ENCODE measurements at regions of chr17 and their contacts with region 1.

Region 1: GRCh38 chr17:5438716-5439445 is at the start of gene C1QBP:
- DNase-seq: peak; percentile 95
- ATAC-seq: peak; percentile 97
- H3K4me3 Mint-ChIP-seq: peak within 1 kb of the TSS; percentile 81
- H3K27ac Mint-ChIP-seq: peak within 1 kb of the TSS; percentile 84
- H3K4me1 Mint-ChIP-seq: peaks cover 34% of the 10 kb centered on the region
- H3K27me3 Mint-ChIP-seq: no peaks in the 10 kb centered on the region
- CTCF ChIP-seq: peak; percentile 98
- total RNA-seq, gene C1QBP: 463 to 470 TPM

Region 2: DNA sequence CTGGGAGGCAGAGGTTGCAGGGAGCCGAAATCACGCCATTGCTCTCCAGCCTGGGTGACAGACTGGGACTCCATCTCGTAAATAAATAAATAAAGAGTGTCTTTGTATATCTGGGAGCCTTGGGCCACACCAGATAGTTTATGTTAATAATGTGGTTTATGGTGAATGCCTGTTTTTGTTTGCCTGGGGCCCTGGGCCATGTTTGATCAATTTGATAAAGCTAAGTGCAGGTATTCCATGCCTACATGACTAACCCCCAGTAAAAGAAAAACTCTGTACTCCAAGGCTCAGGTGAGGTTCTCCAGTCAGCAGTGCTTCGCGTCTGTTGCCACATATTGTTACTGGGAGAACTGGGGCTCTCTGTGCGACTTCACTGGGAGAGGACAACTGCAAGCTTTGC is 219.3 kb before region 1 on chr17:
- CTCF ChIA-PET with region 1: no interaction called
- POLR2A ChIA-PET with region 1: no interaction called
- intact Hi-C with region 1: no loop called
- DNase-seq: no peak
- ATAC-seq: no peak
- H3K4me3 Mint-ChIP-seq: no peak overlapping the region
- H3K27ac Mint-ChIP-seq: no peak overlapping the region
- H3K4me1 Mint-ChIP-seq: peaks cover 20% of the 10 kb centered on the region
- H3K27me3 Mint-ChIP-seq: no peaks in the 10 kb centered on the region
- CTCF ChIP-seq: no peak

Region 3: DNA sequence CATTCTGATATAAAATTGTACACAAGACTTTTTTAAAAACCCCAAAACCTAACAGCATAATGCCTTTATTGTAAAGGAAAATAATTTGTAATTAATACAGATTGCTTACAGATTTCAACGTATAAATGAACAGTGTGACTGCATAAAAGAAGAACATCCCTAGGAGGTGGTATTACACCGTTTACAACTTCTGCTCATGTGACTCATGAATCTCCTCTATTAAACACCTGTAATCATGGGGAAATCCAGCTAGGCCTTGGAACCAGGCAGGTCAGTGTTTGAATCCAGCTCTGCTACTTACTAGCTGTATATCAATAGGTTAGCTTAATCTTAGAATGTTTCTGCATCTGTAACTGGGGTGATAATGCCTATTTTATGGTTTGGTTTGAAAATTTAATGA is 141.6 kb before region 1 on chr17:
- CTCF ChIA-PET with region 1: interaction called, 10 read pairs
- POLR2A ChIA-PET with region 1: no interaction called
- intact Hi-C with region 1: no loop called
- DNase-seq: no peak
- ATAC-seq: peak; percentile 49
- H3K4me3 Mint-ChIP-seq: no peak overlapping the region
- H3K27ac Mint-ChIP-seq: peak overlapping the region; percentile 30
- H3K4me1 Mint-ChIP-seq: peaks cover 36% of the 10 kb centered on the region
- H3K27me3 Mint-ChIP-seq: no peaks in the 10 kb centered on the region
- CTCF ChIP-seq: no peak

Region 4: DNA sequence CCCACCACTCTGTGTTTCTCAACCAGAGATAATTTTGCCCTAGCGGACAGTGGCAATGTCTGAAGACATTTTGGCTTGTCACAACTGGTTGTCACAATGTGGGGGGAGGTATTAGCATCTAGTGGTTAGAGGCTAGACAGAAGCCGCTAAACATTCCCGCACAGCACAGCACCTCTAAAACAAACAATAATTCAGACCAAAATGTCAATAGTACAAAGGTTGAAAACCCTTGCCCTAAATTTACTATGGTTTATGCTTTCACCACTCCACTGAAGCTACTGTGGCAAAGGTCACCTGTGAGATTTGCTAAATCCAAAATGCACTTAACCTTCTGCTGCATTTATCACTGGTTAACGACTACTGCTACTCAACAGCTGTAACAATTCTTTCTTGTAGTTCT is 33.5 kb before region 1 on chr17:
- CTCF ChIA-PET with region 1: interaction called, 19 read pairs
- POLR2A ChIA-PET with region 1: interaction called, 6 read pairs
- intact Hi-C with region 1: no loop called
- DNase-seq: no peak
- ATAC-seq: no peak
- H3K4me3 Mint-ChIP-seq: no peak overlapping the region
- H3K27ac Mint-ChIP-seq: no peak overlapping the region
- H3K4me1 Mint-ChIP-seq: peaks cover 11% of the 10 kb centered on the region
- H3K27me3 Mint-ChIP-seq: no peaks in the 10 kb centered on the region
- CTCF ChIP-seq: no peak

Region 5: GRCh38 chr17:5419356-5419958 is 19.4 kb before region 1 on chr17 and contains the start of gene NUP88:
- CTCF ChIA-PET with region 1: interaction called, 68 read pairs
- POLR2A ChIA-PET with region 1: interaction called, 30 read pairs
- intact Hi-C with region 1: no loop called
- DNase-seq: peak; percentile 98
- ATAC-seq: peak; percentile 94
- H3K4me3 Mint-ChIP-seq: peak within 1 kb of the TSS; percentile 100
- H3K27ac Mint-ChIP-seq: peak within 1 kb of the TSS; percentile 100
- H3K4me1 Mint-ChIP-seq: peaks cover 40% of the 10 kb centered on the region
- H3K27me3 Mint-ChIP-seq: no peaks in the 10 kb centered on the region
- CTCF ChIP-seq: no peak
- total RNA-seq, gene NUP88: 140 to 141 TPM

Region 6: DNA sequence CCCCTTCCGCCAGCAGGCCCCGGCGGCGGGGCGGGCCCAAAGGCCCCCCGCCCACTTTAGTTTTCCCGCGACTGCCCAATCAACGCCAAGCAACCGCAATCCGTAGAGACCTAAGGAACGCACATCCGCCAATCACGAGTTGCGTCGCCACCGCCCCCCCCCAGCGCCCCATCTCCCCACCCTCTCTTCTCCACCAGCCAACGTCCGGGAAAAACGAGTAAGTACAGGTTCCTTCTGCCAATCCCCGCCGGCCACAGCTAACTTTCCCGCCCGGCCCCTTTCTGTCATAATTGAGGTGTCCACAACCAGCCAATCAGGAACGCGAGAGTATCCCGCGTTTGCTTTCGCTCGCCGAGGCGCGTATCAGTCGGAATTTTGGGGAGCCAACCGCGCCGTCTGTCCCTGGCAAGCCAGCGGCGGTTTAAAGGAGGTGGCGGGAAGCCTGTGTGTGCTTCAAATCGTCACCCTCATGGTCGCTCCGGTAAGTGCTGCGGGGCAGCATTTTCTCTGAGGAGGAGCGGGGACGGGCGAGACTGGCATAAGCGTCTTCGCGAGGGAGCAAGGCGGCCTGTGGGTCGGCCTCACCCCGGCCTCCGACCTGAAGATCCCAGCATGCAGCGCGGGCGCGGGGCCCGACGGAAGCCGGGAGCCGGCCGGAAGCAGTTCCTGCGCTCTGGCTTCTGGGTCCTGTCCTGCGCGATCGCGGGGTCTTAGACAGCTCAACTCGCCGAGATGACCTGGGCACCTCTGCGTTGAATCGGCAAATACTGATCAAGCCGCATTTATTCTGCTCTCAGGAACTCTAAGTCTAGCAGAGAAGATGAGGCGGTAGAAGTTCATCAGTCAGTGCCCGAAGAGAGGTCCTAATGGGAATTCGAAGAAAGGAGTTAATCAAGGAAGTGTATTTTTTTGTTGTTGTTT is 47.6 kb after region 1 on chr17 and contains the start of gene MIS12:
- CTCF ChIA-PET with region 1: interaction called, 14 read pairs
- POLR2A ChIA-PET with region 1: interaction called, 4 read pairs
- intact Hi-C with region 1: no loop called
- DNase-seq: peak; percentile 100
- ATAC-seq: peak; percentile 92
- H3K4me3 Mint-ChIP-seq: peak within 1 kb of the TSS; percentile 93
- H3K27ac Mint-ChIP-seq: peak within 1 kb of the TSS; percentile 99
- H3K4me1 Mint-ChIP-seq: peaks cover 56% of the 10 kb centered on the region
- H3K27me3 Mint-ChIP-seq: no peaks in the 10 kb centered on the region
- CTCF ChIP-seq: no peak
- total RNA-seq, gene MIS12: 30.3 to 35.0 TPM

Region 7: GRCh38 chr17:5565808-5566207 is 126.9 kb after region 1 on chr17:
- CTCF ChIA-PET with region 1: no interaction called
- POLR2A ChIA-PET with region 1: no interaction called
- intact Hi-C with region 1: no loop called
- DNase-seq: no peak
- ATAC-seq: no peak
- H3K4me3 Mint-ChIP-seq: no peak overlapping the region
- H3K27ac Mint-ChIP-seq: peak overlapping the region; percentile 18
- H3K4me1 Mint-ChIP-seq: peaks cover 42% of the 10 kb centered on the region
- H3K27me3 Mint-ChIP-seq: no peaks in the 10 kb centered on the region
- CTCF ChIP-seq: no peak